Psoas muscle (tissue), 8 donors: ENCODE measurements at regions of chr10 and their contacts with region 1.

Region 1: DNA sequence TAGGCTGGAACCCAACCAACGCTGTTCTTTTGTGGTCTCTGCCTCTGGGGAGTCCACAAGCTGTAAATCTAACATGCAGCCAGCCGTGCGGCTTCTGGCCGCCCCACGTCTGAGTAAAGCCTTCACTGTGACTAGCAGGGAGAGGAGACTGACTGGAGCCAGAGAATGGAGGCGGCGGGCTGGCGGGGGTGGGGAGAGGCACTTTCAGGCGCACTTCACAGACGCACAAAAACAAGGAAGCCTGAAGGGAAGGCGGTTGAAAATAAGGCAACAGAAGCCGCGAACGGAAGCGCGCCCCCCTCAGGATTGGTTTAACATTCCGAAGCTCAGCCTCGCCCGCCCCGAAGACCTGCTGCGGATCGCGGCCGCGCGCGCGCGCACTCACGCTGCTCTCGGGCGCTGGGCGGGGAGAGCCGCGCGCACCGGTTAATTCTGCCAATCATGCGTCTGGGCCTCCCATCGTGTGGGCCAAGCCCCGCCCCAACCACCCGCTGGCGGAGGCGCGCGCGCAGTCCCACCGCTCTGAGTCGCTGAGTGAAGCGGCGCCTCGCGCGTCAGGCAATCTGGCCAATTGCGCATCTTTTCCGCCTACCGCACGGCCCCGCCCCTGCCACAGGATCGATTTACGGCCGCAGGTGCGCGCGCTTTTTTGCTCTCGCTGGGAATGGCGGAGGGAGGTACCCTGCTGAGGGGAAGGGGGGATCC is at the start of gene SFR1:
- DNase-seq: peak; percentile 99
- ATAC-seq: peak; percentile 96 to 97 (median 96)
- H3K4me3 ChIP-seq: peak within 1 kb of the TSS; percentile 85
- H3K27ac ChIP-seq: peak within 1 kb of the TSS; percentile 98
- H3K4me1 ChIP-seq: peaks cover 12% of the 10 kb centered on the region
- H3K27me3 ChIP-seq: no peaks in the 10 kb centered on the region
- CTCF ChIP-seq: peak; percentile 58
- total RNA-seq, gene SFR1: 3.5 to 5.6 (median 3.9) TPM

Region 2: GRCh38 chr10:102841827-102842345 is 1279.8 kb before region 1 on chr10:
- intact Hi-C with region 1: no loop called
- DNase-seq: no peak
- ATAC-seq: no peak
- H3K4me3 ChIP-seq: no peak overlapping the region
- H3K27ac ChIP-seq: no peak overlapping the region
- H3K4me1 ChIP-seq: no peaks in the 10 kb centered on the region
- H3K27me3 ChIP-seq: peaks cover 0 to 11% (median 0%) of the 10 kb centered on the region in 3 donors
- CTCF ChIP-seq: no peak

Region 3: GRCh38 chr10:103888113-103888841 is 233.4 kb before region 1 on chr10:
- intact Hi-C with region 1: loop called (anchors 5 to 10 kb)
- DNase-seq: peak; percentile 75 to 91
- ATAC-seq: peak; percentile 85 to 92 (median 90)
- H3K4me3 ChIP-seq: no peak overlapping the region
- H3K27ac ChIP-seq: peak overlapping the region; percentile 78
- H3K4me1 ChIP-seq: peaks cover 16% of the 10 kb centered on the region
- H3K27me3 ChIP-seq: no peaks in the 10 kb centered on the region
- CTCF ChIP-seq: peak; percentile 88

Region 4: GRCh38 chr10:103911021-103911459 is 210.6 kb before region 1 on chr10:
- intact Hi-C with region 1: loop called in 1 of 2 experiments (anchors 5 kb)
- DNase-seq: no peak
- ATAC-seq: no peak
- H3K4me3 ChIP-seq: no peak overlapping the region
- H3K27ac ChIP-seq: peak overlapping the region; percentile 25
- H3K4me1 ChIP-seq: peaks cover 31% of the 10 kb centered on the region
- H3K27me3 ChIP-seq: no peaks in the 10 kb centered on the region
- CTCF ChIP-seq: no peak

Region 5: GRCh38 chr10:103966671-103967447 is 154.8 kb before region 1 on chr10 and contains the start of gene SLK:
- intact Hi-C with region 1: loop called in 1 of 2 experiments (anchors 5 kb)
- DNase-seq: peak; percentile 89 to 93
- ATAC-seq: peak; percentile 96 to 98 (median 98)
- H3K4me3 ChIP-seq: peak within 1 kb of the TSS; percentile 97
- H3K27ac ChIP-seq: peak within 1 kb of the TSS; percentile 95
- H3K4me1 ChIP-seq: peaks cover 25% of the 10 kb centered on the region
- H3K27me3 ChIP-seq: no peaks in the 10 kb centered on the region
- CTCF ChIP-seq: no peak
- total RNA-seq, gene SLK: 36.6 to 48.6 (median 41.0) TPM

Region 6: GRCh38 chr10:104028146-104028545 is 93.5 kb before region 1 on chr10:
- intact Hi-C with region 1: loop called in 1 of 2 experiments (anchors 5 kb)
- DNase-seq: no peak
- ATAC-seq: peak; percentile 60 to 72 (median 66)
- H3K4me3 ChIP-seq: no peak overlapping the region
- H3K27ac ChIP-seq: no peak overlapping the region
- H3K4me1 ChIP-seq: no peaks in the 10 kb centered on the region
- H3K27me3 ChIP-seq: no peaks in the 10 kb centered on the region
- CTCF ChIP-seq: peak; percentile 34

Region 7: GRCh38 chr10:104254493-104255310 is 133.0 kb after region 1 on chr10 and contains the start of gene GSTO1:
- intact Hi-C with region 1: loop called in 1 of 2 experiments (anchors 10 kb)
- DNase-seq: peak; percentile 83 to 89
- ATAC-seq: peak; percentile 72 to 84 (median 76)
- H3K4me3 ChIP-seq: peak within 1 kb of the TSS; percentile 94
- H3K27ac ChIP-seq: peak within 1 kb of the TSS; percentile 99
- H3K4me1 ChIP-seq: peaks cover 31% of the 10 kb centered on the region
- H3K27me3 ChIP-seq: no peaks in the 10 kb centered on the region
- CTCF ChIP-seq: no peak
- total RNA-seq, gene GSTO1: 95.9 to 222 (median 114) TPM